CD4-positive, alpha-beta T cell (primary cell): ENCODE measurements at regions of chr2 and their contacts with region 1.

Region 1: GRCh38 chr2:54597153-54597848 is 126.2 kb upstream of the EML6 start:
- DNase-seq: peak in 4 of 14 experiments; percentile 4 to 54 (median 46)
- ATAC-seq: peak; percentile 27
- H3K4me3 ChIP-seq: peak overlapping the region; percentile 13
- H3K4me3 Mint-ChIP-seq: peak overlapping the region; percentile 87
- H3K27ac ChIP-seq: peak overlapping the region; percentile 49 to 69
- H3K27ac Mint-ChIP-seq: peak overlapping the region; percentile 96
- H3K4me1 ChIP-seq: peaks cover 84% of the 10 kb centered on the region
- H3K4me1 Mint-ChIP-seq: peaks cover 98% of the 10 kb centered on the region
- H3K27me3 ChIP-seq: no peaks in the 10 kb centered on the region
- H3K27me3 Mint-ChIP-seq: no peaks in the 10 kb centered on the region
- CTCF ChIP-seq: no peak

Region 2: DNA sequence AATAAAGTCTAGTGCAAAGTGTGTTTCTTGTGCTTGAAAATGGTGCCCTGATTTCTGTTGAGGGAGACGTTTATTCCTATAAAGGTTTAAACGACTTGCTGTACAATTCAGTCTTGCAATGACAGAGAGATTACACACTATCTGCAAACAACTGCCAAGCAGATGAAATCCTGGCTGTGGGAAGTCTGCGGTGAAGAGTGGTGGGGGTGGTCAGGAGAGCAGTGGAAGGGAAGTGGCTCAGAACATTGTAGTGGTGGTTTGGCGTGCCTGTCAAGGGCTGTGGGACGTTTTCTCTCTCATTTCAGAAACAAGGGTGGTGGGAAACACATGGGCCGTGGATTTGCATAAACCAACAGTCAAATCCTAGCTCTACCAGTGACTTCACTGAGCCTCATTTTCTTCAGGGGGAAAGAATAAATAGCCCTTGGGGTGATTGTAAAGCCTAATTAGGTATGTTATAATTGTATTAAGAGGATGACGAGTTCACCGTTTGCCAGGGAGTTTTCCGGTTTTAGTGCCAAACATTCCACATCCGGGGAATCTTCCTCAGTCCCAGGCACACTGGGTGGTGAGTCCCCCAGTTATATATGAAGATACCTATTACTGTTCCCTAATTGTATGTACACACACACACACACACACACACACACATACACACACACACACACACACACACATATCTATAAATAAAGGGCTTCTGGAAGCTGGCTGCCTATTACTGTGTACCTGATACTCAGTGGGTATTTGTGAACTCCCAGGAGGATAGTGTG is 26.2 kb before region 1 on chr2:
- CTCF ChIA-PET with region 1: interaction called, 3 read pairs
- POLR2A ChIA-PET with region 1: interaction called, 16 read pairs
- intact Hi-C with region 1: no loop called
- DNase-seq: peak in 12 of 14 experiments; percentile 39 to 87 (median 64)
- ATAC-seq: peak; percentile 14
- H3K4me3 ChIP-seq: peak overlapping the region; percentile 31
- H3K4me3 Mint-ChIP-seq: peak overlapping the region; percentile 81
- H3K27ac ChIP-seq: peak overlapping the region; percentile 89 to 98
- H3K27ac Mint-ChIP-seq: peak overlapping the region; percentile 96
- H3K4me1 ChIP-seq: peaks cover 90% of the 10 kb centered on the region
- H3K4me1 Mint-ChIP-seq: peaks cover 95% of the 10 kb centered on the region
- H3K27me3 ChIP-seq: no peaks in the 10 kb centered on the region
- H3K27me3 Mint-ChIP-seq: no peaks in the 10 kb centered on the region
- CTCF ChIP-seq: no peak

Region 3: DNA sequence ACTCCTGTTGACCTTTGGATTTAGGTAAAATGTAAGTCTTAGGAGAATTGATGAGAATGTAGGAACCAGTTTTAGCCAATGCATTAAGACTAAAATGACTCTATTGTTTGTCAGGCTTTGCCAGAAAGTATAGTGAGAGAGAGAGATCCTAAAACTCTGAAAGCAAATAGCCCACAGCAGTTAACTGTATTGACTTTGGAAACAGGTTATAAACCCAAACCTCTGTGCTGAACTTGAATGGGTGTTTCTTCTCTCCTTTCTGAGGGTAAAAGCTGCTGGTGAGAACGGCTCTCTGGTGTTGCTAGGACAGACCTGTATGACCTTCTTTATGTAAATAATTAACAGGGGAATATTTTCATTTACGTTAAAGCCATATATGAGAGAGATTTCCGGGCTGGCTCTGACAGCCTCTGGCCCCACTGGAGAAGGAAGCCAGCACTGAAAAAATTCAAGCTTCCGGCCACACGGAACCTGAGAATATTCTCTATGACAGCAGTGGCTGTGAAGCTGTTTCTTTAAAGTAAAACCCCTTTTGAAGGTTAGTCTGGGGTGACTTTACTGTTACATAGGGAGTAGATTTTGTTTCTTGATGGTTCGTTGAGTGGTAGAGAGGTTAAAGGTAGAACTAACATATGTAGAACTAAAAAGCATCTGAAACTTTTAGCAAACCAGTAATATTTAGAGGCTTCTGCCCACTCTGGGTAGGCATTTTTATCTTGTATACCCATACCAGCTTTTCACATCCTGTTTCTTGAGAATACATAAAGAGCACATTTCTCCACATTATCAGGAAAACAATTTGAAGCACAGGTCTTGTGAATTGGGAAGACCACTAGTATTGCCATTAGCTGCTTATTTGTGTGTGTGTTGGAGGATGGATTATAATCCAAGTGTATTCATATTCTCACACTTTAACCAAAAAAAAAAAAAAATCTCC is 17.3 kb before region 1 on chr2:
- CTCF ChIA-PET with region 1: interaction called, 3 read pairs
- POLR2A ChIA-PET with region 1: interaction called, 16 read pairs
- intact Hi-C with region 1: loop called in 1 of 2 experiments (anchors 2 kb)
- DNase-seq: peak in 11 of 14 experiments; percentile 38 to 82 (median 46)
- ATAC-seq: peak; percentile 53
- H3K4me3 ChIP-seq: peak overlapping the region; percentile 8
- H3K4me3 Mint-ChIP-seq: peak overlapping the region; percentile 70
- H3K27ac ChIP-seq: peak overlapping the region; percentile 75 to 89
- H3K27ac Mint-ChIP-seq: peak overlapping the region; percentile 96
- H3K4me1 ChIP-seq: peaks cover 87% of the 10 kb centered on the region
- H3K4me1 Mint-ChIP-seq: peaks cover 98% of the 10 kb centered on the region
- H3K27me3 ChIP-seq: no peaks in the 10 kb centered on the region
- H3K27me3 Mint-ChIP-seq: no peaks in the 10 kb centered on the region
- CTCF ChIP-seq: no peak

Region 4: GRCh38 chr2:55482186-55482884 is 885.0 kb after region 1 on chr2:
- CTCF ChIA-PET with region 1: no interaction called
- POLR2A ChIA-PET with region 1: no interaction called
- intact Hi-C with region 1: no loop called
- DNase-seq: no peak
- ATAC-seq: no peak
- H3K4me3 ChIP-seq: no peak overlapping the region
- H3K4me3 Mint-ChIP-seq: no peak overlapping the region
- H3K27ac ChIP-seq: no peak overlapping the region
- H3K27ac Mint-ChIP-seq: no peak overlapping the region
- H3K4me1 ChIP-seq: no peaks in the 10 kb centered on the region
- H3K4me1 Mint-ChIP-seq: no peaks in the 10 kb centered on the region
- H3K27me3 ChIP-seq: no peaks in the 10 kb centered on the region
- H3K27me3 Mint-ChIP-seq: no peaks in the 10 kb centered on the region
- CTCF ChIP-seq: no peak